ENCODE measurements at regions of chr2 and their contacts with region 1.

Region 1: DNA sequence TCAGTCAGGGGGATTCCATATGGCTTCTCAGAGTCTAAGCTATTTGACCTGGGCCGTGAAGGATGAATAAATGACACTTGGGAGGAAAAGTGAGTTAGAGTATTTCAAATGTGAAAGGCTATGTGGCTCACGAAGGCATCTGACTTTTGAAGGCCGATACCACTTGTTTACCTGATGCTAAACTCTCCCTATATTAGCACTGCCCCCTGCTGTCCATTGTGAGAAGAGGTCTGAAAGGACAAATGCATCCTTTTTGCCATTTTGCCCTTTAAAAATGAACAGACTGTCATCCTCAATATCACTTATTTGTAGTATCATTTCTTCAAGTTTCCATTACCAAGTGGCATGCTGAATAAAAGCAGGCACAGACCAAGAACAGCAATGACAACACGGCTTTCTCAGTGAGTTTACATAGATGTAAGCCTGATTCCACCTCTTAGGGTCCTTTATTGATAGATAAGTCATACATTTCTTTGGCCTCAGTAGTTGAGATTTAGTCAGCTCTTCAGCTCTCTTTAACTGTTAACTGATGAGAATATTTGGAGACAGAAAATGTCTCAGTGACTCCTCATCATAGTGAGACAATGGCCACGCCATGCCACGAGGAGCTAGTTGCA is 40.1 kb downstream of the DOCK10 start:
- DNase-seq: peak; percentile 83
- ATAC-seq: peak; percentile 68
- H3K4me3 ChIP-seq: no peak overlapping the region
- H3K4me3 Mint-ChIP-seq: peak overlapping the region; percentile 53
- H3K27ac ChIP-seq: peak overlapping the region; percentile 22 to 51
- H3K27ac Mint-ChIP-seq: peak overlapping the region; percentile 90
- H3K4me1 ChIP-seq: peaks cover 19% of the 10 kb centered on the region in 2 donors
- H3K4me1 Mint-ChIP-seq: peaks cover 25% of the 10 kb centered on the region
- H3K27me3 ChIP-seq: no peaks in the 10 kb centered on the region
- H3K27me3 Mint-ChIP-seq: no peaks in the 10 kb centered on the region
- CTCF ChIP-seq: peak; percentile 80

Region 2: DNA sequence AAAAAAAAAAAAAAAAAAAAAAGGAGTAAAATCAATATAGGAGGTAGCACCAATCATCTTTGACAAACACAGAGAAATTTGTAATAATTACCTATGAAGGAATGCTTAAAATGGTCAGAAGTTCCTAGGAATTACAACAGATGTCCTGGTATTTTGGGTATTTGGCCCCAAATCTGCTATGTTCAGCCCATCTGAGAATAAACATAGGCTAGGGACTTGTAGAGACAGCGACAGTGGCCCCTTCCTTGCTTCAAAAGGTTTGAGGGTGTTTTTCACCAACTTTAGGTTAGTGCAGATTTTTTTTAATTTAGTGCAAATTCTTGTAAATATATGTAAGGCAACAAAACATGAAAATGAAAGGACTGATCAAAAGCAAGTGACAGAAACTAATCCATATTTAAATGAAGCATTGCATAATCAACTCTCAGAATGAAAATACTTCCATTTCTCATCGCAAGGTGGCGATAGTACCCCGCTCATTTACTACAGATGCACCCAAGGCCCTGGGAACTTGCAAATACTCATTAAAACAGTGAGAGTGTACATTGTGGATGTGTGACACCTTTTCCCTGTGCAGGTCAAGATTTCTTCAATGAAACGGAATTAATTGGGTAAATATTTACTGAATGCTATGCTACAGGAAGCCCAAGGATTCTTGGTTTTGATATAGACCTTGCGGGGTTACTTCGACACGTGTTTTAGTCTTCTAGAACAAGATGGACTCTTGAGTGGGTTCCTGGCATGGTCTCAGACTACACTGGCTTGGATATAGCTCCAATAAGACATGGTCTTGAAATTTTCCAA is 644.8 kb before region 1 on chr2:
- CTCF ChIA-PET with region 1: no interaction called
- POLR2A ChIA-PET with region 1: no interaction called
- intact Hi-C with region 1: loop called (anchors 2 kb)
- DNase-seq: peak; percentile 79
- ATAC-seq: peak; percentile 81
- H3K4me3 ChIP-seq: no peak overlapping the region
- H3K4me3 Mint-ChIP-seq: no peak overlapping the region
- H3K27ac ChIP-seq: no peak overlapping the region
- H3K27ac Mint-ChIP-seq: no peak overlapping the region
- H3K4me1 ChIP-seq: no peaks in the 10 kb centered on the region
- H3K4me1 Mint-ChIP-seq: no peaks in the 10 kb centered on the region
- H3K27me3 ChIP-seq: no peaks in the 10 kb centered on the region
- H3K27me3 Mint-ChIP-seq: peaks cover 11% of the 10 kb centered on the region
- CTCF ChIP-seq: peak; percentile 87

Region 3: GRCh38 chr2:224875841-224876240 is 126.3 kb before region 1 on chr2:
- CTCF ChIA-PET with region 1: interaction called, 14 read pairs
- POLR2A ChIA-PET with region 1: interaction called, 3 read pairs
- intact Hi-C with region 1: loop called (anchors 2 kb)
- DNase-seq: peak; percentile 17
- ATAC-seq: peak; percentile 28
- H3K4me3 ChIP-seq: no peak overlapping the region
- H3K4me3 Mint-ChIP-seq: peak overlapping the region; percentile 65
- H3K27ac ChIP-seq: peak overlapping the region; percentile 39 to 61
- H3K27ac Mint-ChIP-seq: peak overlapping the region; percentile 77
- H3K4me1 ChIP-seq: peaks cover 28 to 29% of the 10 kb centered on the region in 2 donors
- H3K4me1 Mint-ChIP-seq: peaks cover 29% of the 10 kb centered on the region
- H3K27me3 ChIP-seq: no peaks in the 10 kb centered on the region
- H3K27me3 Mint-ChIP-seq: no peaks in the 10 kb centered on the region
- CTCF ChIP-seq: no peak

Region 4: GRCh38 chr2:224938651-224939182 is 63.4 kb before region 1 on chr2:
- CTCF ChIA-PET with region 1: interaction called, 124 read pairs
- POLR2A ChIA-PET with region 1: no interaction called
- intact Hi-C with region 1: no loop called
- DNase-seq: peak; percentile 45
- ATAC-seq: peak; percentile 50
- H3K4me3 ChIP-seq: peak overlapping the region in 1 of 5 experiments; percentile 26
- H3K4me3 Mint-ChIP-seq: peak overlapping the region; percentile 70
- H3K27ac ChIP-seq: peak overlapping the region; percentile 60 to 80
- H3K27ac Mint-ChIP-seq: peak overlapping the region; percentile 91
- H3K4me1 ChIP-seq: peaks cover 52 to 61% of the 10 kb centered on the region in 2 donors
- H3K4me1 Mint-ChIP-seq: peaks cover 80% of the 10 kb centered on the region
- H3K27me3 ChIP-seq: no peaks in the 10 kb centered on the region
- H3K27me3 Mint-ChIP-seq: no peaks in the 10 kb centered on the region
- CTCF ChIP-seq: no peak

Region 5: DNA sequence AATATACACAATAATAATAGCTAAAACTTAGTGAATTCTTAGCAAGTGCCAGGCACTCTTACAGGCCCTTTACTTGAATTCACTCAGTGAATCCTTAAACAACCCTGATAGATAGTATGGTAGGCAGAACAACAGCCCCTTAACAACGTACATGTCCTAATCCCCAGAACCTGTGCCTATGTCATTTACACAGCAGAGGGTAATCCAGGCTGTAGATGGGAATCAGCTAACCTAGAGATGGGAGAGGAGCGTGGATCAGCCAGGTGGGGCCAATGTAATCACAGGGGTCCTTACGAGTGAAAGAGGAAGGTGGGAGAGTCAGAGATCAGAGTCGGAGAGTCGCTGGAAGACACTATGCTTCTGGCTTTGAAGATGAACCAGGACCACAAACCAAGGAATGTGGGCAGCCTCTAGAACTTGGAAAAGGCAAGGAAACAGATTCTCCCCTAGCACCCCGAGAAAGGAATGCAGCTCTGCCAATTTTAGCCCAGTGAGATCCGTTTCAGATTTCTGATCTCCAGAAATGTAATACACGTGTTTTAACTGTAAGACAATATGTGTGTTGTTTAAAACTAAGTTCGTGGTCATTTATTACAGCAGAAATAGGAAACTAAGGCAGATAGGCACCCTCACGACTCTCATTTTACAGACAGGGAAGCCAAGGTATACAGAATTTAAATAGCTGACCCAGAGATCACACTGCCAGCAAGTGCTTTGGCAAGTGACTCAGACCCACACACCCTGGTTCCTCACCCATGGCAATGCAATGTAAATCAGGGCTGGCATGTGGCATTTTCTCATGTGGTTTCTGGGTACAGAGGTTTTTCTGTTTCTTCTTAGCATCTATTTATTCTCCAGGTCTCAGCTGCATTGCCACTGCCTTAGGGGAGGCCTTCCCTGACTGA is 28.8 kb before region 1 on chr2:
- CTCF ChIA-PET with region 1: interaction called, 22 read pairs
- POLR2A ChIA-PET with region 1: no interaction called
- intact Hi-C with region 1: no loop called
- DNase-seq: peak; percentile 59
- ATAC-seq: peak; percentile 77
- H3K4me3 ChIP-seq: peak overlapping the region in 1 of 5 experiments; percentile 15
- H3K4me3 Mint-ChIP-seq: peak overlapping the region; percentile 75
- H3K27ac ChIP-seq: peak overlapping the region; percentile 76 to 79
- H3K27ac Mint-ChIP-seq: peak overlapping the region; percentile 96
- H3K4me1 ChIP-seq: peaks cover 47 to 49% of the 10 kb centered on the region in 2 donors
- H3K4me1 Mint-ChIP-seq: peaks cover 73% of the 10 kb centered on the region
- H3K27me3 ChIP-seq: no peaks in the 10 kb centered on the region
- H3K27me3 Mint-ChIP-seq: no peaks in the 10 kb centered on the region
- CTCF ChIP-seq: no peak

Region 6: GRCh38 chr2:225041851-225042799 is 40.0 kb after region 1 on chr2 and contains the start of gene DOCK10:
- CTCF ChIA-PET with region 1: interaction called, 20 read pairs
- POLR2A ChIA-PET with region 1: interaction called, 3 read pairs
- intact Hi-C with region 1: loop called (anchors 2 kb)
- DNase-seq: peak; percentile 83
- ATAC-seq: peak; percentile 44
- H3K4me3 ChIP-seq: peak within 1 kb of the TSS; percentile 58 to 95 (median 81)
- H3K4me3 Mint-ChIP-seq: peak within 1 kb of the TSS; percentile 95
- H3K27ac ChIP-seq: peak within 1 kb of the TSS; percentile 87 to 91
- H3K27ac Mint-ChIP-seq: peak within 1 kb of the TSS; percentile 97
- H3K4me1 ChIP-seq: peaks cover 26 to 29% of the 10 kb centered on the region in 2 donors
- H3K4me1 Mint-ChIP-seq: peaks cover 48% of the 10 kb centered on the region
- H3K27me3 ChIP-seq: peaks cover 0 to 5% (median 1%) of the 10 kb centered on the region in 4 experiments
- H3K27me3 Mint-ChIP-seq: peaks cover 8% of the 10 kb centered on the region
- CTCF ChIP-seq: no peak
- total RNA-seq, gene DOCK10: 139 and 140 TPM in 2 replicates

Measured in B cell (primary cell).